ENCODE measurements at regions of chr12 and their contacts with region 1.

Region 1: DNA sequence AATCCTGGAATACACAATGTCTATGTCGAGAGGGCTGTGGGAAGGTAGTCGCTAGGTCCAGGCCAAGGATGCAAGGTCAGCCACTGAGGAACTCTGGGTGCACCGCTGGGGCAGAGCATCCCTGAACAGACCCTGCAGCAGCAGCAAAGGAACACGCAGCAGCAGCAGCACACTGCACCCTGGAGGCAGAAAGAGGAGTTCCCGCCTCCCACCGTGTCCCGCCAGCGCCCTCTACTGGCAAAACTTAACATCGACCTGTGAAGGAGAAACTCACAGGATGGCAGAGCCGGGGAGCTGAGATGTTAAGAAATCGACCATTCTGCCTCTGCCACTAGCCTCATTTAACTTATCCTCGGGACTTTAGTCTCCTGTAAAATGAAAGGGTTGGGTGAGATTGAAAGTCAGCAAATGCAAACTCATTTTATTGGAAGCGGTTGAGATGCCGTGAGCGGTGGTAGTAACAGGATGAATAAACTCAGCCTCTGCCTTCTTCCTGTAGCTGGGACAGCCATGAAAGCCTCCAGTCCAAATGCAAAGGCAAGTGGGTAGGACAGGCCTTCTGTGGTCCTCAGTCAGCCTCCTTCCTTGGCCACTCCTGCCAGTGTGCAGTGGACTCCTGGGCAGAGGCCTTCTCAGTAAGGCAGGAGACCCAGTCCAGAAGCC is 45.6 kb downstream of the STAB2 start:
- DNase-seq: peak; percentile 86 to 97
- H3K4me3 ChIP-seq: no peak overlapping the region
- H3K27ac ChIP-seq: no peak overlapping the region
- H3K4me1 ChIP-seq: no peaks in the 10 kb centered on the region
- H3K27me3 ChIP-seq: no peaks in the 10 kb centered on the region
- CTCF ChIP-seq: peak; percentile 100
- EP300 ChIP-seq: no peak
- POLR2A ChIP-seq: no peak
- RAD21 ChIP-seq: peak; percentile 92 to 94

Region 2: GRCh38 chr12:103369929-103370328 is 262.8 kb before region 1 on chr12:
- CTCF ChIA-PET with region 1: no interaction called
- POLR2A ChIA-PET with region 1: no interaction called
- DNase-seq: no peak
- H3K4me3 ChIP-seq: no peak overlapping the region
- H3K27ac ChIP-seq: no peak overlapping the region
- H3K4me1 ChIP-seq: no peaks in the 10 kb centered on the region
- H3K27me3 ChIP-seq: no peaks in the 10 kb centered on the region
- CTCF ChIP-seq: no peak
- EP300 ChIP-seq: no peak
- POLR2A ChIP-seq: no peak
- RAD21 ChIP-seq: no peak

Region 3: GRCh38 chr12:103560604-103561573 is 71.8 kb before region 1 on chr12:
- CTCF ChIA-PET with region 1: interaction called, 15 read pairs
- POLR2A ChIA-PET with region 1: no interaction called
- DNase-seq: no peak
- H3K4me3 ChIP-seq: no peak overlapping the region
- H3K27ac ChIP-seq: no peak overlapping the region
- H3K4me1 ChIP-seq: no peaks in the 10 kb centered on the region
- H3K27me3 ChIP-seq: no peaks in the 10 kb centered on the region
- CTCF ChIP-seq: no peak
- EP300 ChIP-seq: no peak
- POLR2A ChIP-seq: no peak
- RAD21 ChIP-seq: no peak

Region 4: DNA sequence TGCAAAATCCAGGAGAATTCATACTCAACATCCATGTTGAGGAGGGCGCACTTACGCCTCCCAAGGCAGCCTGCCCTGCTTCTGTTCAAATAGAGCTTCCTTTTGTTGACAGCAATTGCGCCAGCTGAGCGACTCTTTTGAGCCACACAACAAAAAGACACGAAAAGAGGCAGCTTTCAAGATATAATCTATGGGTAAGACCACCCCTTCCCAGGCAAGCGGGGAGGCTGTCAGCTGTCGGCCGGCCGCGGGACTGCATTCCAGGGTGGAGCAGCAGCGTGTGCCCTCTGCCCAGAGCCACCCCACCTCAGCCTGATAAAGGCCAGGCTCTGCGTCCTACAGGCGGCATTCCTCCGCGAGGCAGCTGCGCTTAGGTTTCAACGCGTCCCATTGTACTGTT is 61.4 kb before region 1 on chr12:
- CTCF ChIA-PET with region 1: interaction called, 70 read pairs
- POLR2A ChIA-PET with region 1: no interaction called
- DNase-seq: peak in 1 of 2 experiments; percentile 73
- H3K4me3 ChIP-seq: peak overlapping the region; percentile 6 to 46 (median 14); a peak in 5 of 8 replicates
- H3K27ac ChIP-seq: no peak overlapping the region
- H3K4me1 ChIP-seq: peaks cover 0 to 6% (median 4%) of the 10 kb centered on the region in 4 experiments; a peak in 3 of 7 replicates
- H3K27me3 ChIP-seq: no peaks in the 10 kb centered on the region; a peak in 1 of 7 replicates
- CTCF ChIP-seq: peak in 1 of 3 experiments; percentile 17; a peak in 1 of 4 replicates
- EP300 ChIP-seq: no peak
- POLR2A ChIP-seq: no peak
- RAD21 ChIP-seq: peak in 1 of 2 experiments; percentile 11; a peak in 1 of 4 replicates

Region 5: DNA sequence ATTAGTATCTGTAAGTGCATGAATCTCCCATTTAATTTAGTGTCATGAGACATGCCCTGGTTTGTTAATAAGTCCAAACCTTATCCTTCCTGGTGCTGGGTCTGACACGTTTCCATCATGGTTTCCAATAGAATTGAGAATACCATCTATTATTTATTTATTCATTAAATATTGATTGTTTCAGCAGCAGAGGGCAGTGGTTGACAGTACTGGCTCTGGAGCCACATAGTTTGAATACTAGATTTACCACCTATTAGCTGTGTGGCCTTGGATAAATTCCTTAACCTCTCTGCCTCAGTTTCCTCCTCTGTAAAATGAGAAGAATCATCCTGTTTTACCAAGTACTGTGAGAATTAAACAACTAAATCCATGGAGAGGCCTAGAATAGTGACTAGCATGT is 46.6 kb before region 1 on chr12:
- CTCF ChIA-PET with region 1: interaction called, 23 read pairs
- POLR2A ChIA-PET with region 1: no interaction called
- DNase-seq: no peak
- H3K4me3 ChIP-seq: no peak overlapping the region
- H3K27ac ChIP-seq: no peak overlapping the region
- H3K4me1 ChIP-seq: no peaks in the 10 kb centered on the region
- H3K27me3 ChIP-seq: no peaks in the 10 kb centered on the region
- CTCF ChIP-seq: no peak
- EP300 ChIP-seq: no peak
- POLR2A ChIP-seq: no peak
- RAD21 ChIP-seq: no peak; a peak in 1 of 4 replicates

Region 6: GRCh38 chr12:103647267-103647666 is 14.6 kb after region 1 on chr12:
- CTCF ChIA-PET with region 1: interaction called, 37 read pairs
- POLR2A ChIA-PET with region 1: no interaction called
- DNase-seq: no peak
- H3K4me3 ChIP-seq: no peak overlapping the region
- H3K27ac ChIP-seq: no peak overlapping the region
- H3K4me1 ChIP-seq: no peaks in the 10 kb centered on the region
- H3K27me3 ChIP-seq: no peaks in the 10 kb centered on the region
- CTCF ChIP-seq: no peak
- EP300 ChIP-seq: no peak
- POLR2A ChIP-seq: no peak
- RAD21 ChIP-seq: no peak

Region 7: GRCh38 chr12:103665971-103666370 is 33.3 kb after region 1 on chr12:
- CTCF ChIA-PET with region 1: interaction called, 10 read pairs
- POLR2A ChIA-PET with region 1: no interaction called
- DNase-seq: no peak
- H3K4me3 ChIP-seq: no peak overlapping the region
- H3K27ac ChIP-seq: no peak overlapping the region
- H3K4me1 ChIP-seq: peaks cover 2 to 4% (median 4%) of the 10 kb centered on the region in 4 experiments; a peak in 5 of 7 replicates
- H3K27me3 ChIP-seq: no peaks in the 10 kb centered on the region
- CTCF ChIP-seq: no peak
- EP300 ChIP-seq: no peak
- POLR2A ChIP-seq: no peak
- RAD21 ChIP-seq: no peak

Region 8: DNA sequence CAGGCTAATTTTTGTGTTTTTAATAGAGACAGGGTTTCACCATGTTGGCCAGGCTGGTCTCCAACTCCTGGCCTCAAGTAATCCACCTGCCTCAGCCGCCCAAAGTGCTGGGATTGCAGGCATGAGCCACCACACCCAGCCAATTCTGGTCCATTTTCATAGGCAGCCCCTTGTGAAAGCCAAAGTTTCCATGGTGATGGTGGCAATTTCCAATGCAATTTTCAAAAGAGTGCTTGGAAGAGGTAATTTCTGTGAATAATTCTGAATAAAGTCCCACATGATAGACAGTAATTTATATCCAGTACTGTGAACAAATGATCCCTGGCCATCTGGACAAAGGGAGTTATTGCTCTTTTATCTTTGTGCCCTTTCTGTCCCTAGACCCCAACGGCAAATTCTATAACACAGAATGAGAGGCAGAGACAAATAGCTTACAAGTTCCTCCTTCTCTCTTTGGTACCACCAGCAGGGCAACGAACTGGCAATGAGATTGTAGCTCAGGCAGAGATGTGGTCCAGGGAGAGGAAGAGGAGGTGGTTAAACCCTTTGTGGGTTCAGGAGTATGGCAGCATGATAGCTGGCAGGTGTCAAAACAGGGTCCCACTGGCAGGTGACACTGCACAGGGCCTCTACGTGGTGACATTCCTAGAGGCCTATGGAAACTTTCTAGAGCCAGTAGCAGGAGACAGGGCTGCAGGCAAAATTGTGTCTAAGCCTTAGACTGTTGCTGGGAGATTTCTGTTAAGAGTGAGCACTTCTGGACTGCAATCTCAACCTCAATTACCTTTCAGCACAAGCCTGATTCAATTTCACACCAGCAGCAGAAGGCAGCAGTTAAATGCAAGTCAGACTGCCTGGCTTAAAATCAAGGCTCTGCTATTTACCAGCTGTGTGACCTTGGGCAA is 161.9 kb after region 1 on chr12:
- CTCF ChIA-PET with region 1: no interaction called
- POLR2A ChIA-PET with region 1: no interaction called
- DNase-seq: no peak
- H3K4me3 ChIP-seq: no peak overlapping the region
- H3K27ac ChIP-seq: no peak overlapping the region
- H3K4me1 ChIP-seq: peaks cover 0 to 4% (median 2%) of the 10 kb centered on the region in 4 experiments; a peak in 3 of 7 replicates
- H3K27me3 ChIP-seq: no peaks in the 10 kb centered on the region
- CTCF ChIP-seq: no peak
- EP300 ChIP-seq: no peak
- POLR2A ChIP-seq: no peak
- RAD21 ChIP-seq: no peak

Region 9: DNA sequence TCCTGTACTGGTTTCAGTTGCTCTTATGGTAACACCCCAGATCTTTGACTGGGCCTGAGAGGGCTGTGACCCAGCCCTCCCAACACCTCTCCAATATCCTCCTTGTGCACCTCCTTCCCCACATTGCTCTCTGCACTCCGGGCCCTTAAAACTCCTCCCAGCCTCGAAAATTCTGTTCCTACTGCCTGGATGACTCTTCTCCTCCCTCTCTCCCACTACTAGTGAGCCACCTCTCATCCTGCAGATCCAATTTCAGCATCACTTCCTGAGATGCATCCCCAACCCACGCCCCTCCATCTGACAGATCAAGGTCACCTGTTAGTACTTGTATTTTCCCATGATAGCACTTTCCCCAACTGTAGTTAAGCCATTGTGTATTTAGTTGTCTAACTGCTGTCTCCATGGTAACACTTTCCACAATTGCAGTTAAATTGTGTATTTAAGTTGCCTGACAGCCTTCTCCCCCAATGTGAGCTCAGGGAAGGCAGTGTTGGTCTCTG is 219.9 kb after region 1 on chr12:
- CTCF ChIA-PET with region 1: no interaction called
- POLR2A ChIA-PET with region 1: no interaction called
- DNase-seq: no peak
- H3K4me3 ChIP-seq: no peak overlapping the region
- H3K27ac ChIP-seq: no peak overlapping the region
- H3K4me1 ChIP-seq: no peaks in the 10 kb centered on the region
- H3K27me3 ChIP-seq: no peaks in the 10 kb centered on the region
- CTCF ChIP-seq: no peak
- EP300 ChIP-seq: no peak
- POLR2A ChIP-seq: no peak
- RAD21 ChIP-seq: no peak